Panc1 (cell line): ENCODE measurements at regions of chr19 and their contacts with region 1.

Region 1: DNA sequence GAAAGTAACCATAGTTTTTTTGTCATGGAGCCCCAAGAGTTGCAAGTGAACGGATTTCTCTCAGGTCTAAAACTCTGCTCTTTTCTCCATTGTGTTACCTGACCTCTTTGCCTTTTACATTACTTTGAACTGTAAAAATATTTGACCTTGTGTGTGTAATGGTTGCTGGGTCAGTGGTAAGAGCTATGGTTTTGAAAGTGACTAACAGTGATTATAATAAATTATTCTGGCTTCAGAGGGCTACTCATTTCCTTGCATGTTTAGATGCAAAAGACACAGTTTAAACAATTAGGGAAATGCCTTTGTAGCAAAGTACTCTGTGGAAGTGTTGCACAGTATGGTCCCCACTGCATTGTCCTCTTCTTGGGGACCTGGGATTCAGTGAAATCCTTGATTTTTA is 29.3 kb upstream of the PSG8 start:
- DNase-seq: no peak
- ATAC-seq: no peak
- H3K4me3 ChIP-seq: no peak overlapping the region
- H3K27ac ChIP-seq: no peak overlapping the region
- H3K4me1 ChIP-seq: no peaks in the 10 kb centered on the region
- H3K27me3 ChIP-seq: no peaks in the 10 kb centered on the region
- CTCF ChIP-seq: no peak

Region 2: GRCh38 chr19:42424712-42425131 is 370.0 kb before region 1 on chr19:
- CTCF ChIA-PET with region 1: no interaction called
- POLR2A ChIA-PET with region 1: no interaction called
- in situ Hi-C with region 1: no loop called
- intact Hi-C with region 1: loop called (anchors 5 kb)
- DNase-seq: no peak
- ATAC-seq: no peak
- H3K4me3 ChIP-seq: no peak overlapping the region
- H3K27ac ChIP-seq: no peak overlapping the region
- H3K4me1 ChIP-seq: no peaks in the 10 kb centered on the region; the same call in 1 of the 2 replicates
- H3K27me3 ChIP-seq: no peaks in the 10 kb centered on the region
- CTCF ChIP-seq: no peak; the same call in 1 of the 2 replicates

Region 3: DNA sequence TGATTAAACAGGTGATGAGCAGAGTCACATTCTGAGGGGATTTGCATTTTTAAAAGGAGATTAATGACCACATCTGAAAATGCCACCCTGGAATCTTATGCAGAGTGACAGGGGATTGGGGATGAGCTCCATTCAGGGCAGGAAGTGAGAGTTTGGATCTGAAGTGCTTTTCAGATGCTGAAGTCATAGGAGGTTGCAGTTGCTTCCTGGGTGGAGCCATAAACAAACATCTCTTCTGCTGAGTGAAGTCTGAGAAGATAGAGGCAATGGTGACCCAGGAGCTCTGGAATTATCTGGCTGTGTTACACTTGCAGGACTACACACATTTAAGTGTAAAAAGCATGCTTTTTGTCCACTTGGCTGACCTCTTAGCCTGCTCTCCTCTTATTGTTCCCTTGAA is 22.1 kb after region 1 on chr19:
- CTCF ChIA-PET with region 1: no interaction called
- POLR2A ChIA-PET with region 1: no interaction called
- in situ Hi-C with region 1: no loop called
- intact Hi-C with region 1: no loop called
- DNase-seq: no peak
- ATAC-seq: no peak
- H3K4me3 ChIP-seq: no peak overlapping the region
- H3K27ac ChIP-seq: no peak overlapping the region
- H3K4me1 ChIP-seq: no peaks in the 10 kb centered on the region
- H3K27me3 ChIP-seq: no peaks in the 10 kb centered on the region
- CTCF ChIP-seq: no peak

Region 4: GRCh38 chr19:42850981-42851717 is 56.4 kb after region 1 on chr19:
- CTCF ChIA-PET with region 1: no interaction called
- POLR2A ChIA-PET with region 1: no interaction called
- in situ Hi-C with region 1: no loop called
- intact Hi-C with region 1: loop called (anchors 10 kb)
- DNase-seq: peak; percentile 78
- ATAC-seq: no peak
- H3K4me3 ChIP-seq: no peak overlapping the region
- H3K27ac ChIP-seq: no peak overlapping the region
- H3K4me1 ChIP-seq: no peaks in the 10 kb centered on the region
- H3K27me3 ChIP-seq: no peaks in the 10 kb centered on the region
- CTCF ChIP-seq: no peak